Left cardiac atrium (tissue), 4 donors: ENCODE measurements at regions of chr2 and their contacts with region 1.

Region 1: DNA sequence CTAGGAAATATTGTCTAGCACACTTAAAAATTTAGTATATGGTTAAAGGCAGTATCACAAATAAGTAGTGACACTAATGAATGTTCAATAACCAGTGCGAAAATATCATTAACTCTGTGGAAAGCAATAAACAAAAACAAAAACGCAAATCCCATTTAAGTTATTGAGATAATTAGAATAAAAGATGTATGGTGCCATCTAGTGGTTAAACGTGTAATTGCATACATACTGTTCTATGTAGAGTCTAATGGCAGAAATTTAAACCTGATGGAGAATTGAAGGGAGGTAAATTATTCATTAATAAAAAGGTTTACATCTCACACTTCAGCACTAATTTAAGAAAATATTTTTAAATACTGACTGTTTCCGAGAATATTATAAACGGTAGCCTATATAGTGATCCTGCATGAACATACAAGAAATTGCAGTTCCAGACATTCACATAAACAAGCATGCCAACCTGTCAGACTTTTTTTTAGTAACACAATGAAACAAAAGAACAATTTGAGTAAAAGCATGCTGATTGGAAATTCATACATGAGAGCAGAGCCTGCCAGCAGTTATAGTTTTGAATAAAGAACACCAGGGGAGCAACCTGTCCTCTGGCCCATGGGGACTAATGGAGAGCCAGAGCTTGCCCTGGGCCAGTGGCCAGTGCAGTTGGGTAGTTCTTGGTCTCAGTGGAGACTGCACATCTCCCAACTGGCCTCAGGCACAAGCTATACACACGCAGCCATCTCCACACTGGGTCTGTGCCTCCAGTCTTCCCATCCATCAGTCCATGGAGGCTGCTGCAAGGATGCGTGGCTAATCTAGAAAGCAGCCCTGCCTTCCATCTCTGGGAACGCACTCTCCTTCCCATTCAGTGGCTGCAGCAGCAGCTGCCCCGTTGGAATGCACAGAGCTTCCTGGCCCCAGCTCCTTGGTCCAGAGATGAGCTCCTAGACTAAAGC is 28.0 kb downstream of the GCG start:
- DNase-seq: no peak
- ATAC-seq: peak in 1 of 2 donors; percentile 42

Region 2: GRCh38 chr2:161586517-161587167 is 537.4 kb before region 1 on chr2:
- intact Hi-C with region 1: loop called in 1 of 2 experiments (anchors 10 kb)
- DNase-seq: no peak
- ATAC-seq: no peak

Region 3: DNA sequence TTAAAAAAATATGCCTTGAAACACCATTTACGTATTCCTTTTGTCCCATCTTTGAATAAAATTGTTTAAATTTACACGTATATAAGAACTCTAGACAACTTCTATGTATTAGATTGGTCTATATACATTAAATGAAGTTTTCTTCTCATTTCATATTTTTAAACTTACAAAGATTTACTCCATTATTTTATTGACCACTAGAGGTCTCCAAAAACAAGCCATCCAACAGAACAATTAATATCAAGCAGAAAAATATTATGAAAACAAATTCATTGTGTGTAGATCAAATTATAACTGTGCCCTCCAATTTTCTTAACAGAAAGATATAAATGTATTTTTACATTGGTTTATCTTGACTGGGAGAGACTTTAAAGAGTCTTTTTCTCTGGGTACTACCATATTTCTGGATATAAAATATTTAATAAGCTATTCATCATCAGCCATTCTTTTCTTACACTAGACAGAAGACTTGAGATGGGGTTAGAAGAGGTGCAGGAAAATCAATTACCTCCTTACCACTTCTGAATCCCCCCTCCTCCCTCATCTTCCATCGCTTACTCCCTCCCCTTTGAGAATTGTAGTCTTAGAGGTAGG is 116.5 kb before region 1 on chr2:
- intact Hi-C with region 1: loop called (anchors 1 to 2 kb)
- DNase-seq: no peak
- ATAC-seq: no peak

Region 4: GRCh38 chr2:162197069-162197825 is 73.2 kb after region 1 on chr2:
- intact Hi-C with region 1: no loop called
- DNase-seq: no peak
- ATAC-seq: no peak